ENCODE measurements at regions of chr2 and their contacts with region 1.

Region 1: DNA sequence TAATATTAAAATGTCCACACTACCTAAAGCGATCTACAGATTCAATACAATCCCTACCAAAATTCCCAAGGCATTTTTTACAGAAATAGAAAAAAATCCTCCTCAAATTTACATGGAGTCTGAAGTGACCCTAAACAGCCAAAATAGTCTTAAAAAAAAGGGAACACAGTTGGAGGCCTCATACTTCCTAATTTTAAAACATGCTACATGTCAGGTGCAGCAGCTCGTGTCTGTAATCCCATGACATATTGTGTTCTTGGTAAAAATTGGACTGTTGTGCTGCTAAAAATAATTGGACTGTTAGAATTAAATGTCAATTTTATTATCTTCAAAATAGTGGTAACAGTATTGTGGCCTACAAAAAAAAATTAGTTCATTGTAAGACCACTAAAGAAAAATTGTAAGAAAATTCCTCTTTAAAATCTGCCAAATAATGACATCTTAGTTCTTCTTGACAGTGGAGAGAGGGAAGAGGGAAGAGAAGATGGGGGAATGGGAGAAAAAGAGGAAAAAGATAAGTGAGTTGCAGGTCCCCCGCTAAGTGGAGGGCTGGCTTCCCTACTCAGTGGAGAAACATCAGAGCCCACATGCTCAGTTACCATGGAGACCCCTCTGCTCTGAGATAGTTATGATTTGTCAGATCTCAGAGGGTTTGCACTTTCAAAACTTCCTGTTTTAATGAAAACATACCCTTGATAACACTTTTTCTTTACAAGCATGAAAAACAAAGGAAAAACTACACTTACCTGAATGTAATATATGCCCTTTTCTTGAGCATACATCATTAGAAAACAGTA is 46.5 kb downstream of the UNC50 start:
- DNase-seq: peak; percentile 53
- H3K4me3 Mint-ChIP-seq: peak overlapping the region; percentile 57
- H3K27ac Mint-ChIP-seq: peak overlapping the region; percentile 94
- H3K4me1 Mint-ChIP-seq: peaks cover 80% of the 10 kb centered on the region
- H3K27me3 Mint-ChIP-seq: no peaks in the 10 kb centered on the region

Region 2: DNA sequence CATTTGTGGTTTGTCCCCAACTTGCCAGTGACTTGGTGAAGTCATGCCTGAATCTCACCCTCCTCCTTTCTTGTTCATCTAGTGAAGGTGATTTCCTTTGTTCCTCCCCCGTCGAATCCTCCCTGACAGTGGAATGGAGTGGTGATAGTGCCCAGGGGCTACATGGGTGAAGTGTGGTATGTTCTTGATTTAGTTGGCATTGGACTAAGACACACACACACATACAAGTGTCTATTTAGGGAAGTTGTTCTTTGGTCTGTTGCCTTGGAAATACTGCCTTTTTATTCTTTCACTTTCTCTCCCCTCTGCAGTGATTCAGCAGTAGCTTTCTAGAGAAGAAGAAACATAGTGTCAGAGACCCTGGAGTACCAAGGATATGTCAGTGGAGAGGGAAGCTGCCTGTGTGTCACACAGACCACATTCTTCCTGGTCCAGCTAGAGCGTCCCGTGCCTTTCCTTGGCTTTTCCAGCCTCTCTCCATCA is 199.4 kb before region 1 on chr2:
- CTCF ChIA-PET with region 1: no interaction called
- intact Hi-C with region 1: loop called (anchors 5 kb)
- DNase-seq: peak; percentile 66
- H3K4me3 Mint-ChIP-seq: peak overlapping the region; percentile 59
- H3K27ac Mint-ChIP-seq: peak overlapping the region; percentile 89
- H3K4me1 Mint-ChIP-seq: peaks cover 98% of the 10 kb centered on the region
- H3K27me3 Mint-ChIP-seq: no peaks in the 10 kb centered on the region

Region 3: DNA sequence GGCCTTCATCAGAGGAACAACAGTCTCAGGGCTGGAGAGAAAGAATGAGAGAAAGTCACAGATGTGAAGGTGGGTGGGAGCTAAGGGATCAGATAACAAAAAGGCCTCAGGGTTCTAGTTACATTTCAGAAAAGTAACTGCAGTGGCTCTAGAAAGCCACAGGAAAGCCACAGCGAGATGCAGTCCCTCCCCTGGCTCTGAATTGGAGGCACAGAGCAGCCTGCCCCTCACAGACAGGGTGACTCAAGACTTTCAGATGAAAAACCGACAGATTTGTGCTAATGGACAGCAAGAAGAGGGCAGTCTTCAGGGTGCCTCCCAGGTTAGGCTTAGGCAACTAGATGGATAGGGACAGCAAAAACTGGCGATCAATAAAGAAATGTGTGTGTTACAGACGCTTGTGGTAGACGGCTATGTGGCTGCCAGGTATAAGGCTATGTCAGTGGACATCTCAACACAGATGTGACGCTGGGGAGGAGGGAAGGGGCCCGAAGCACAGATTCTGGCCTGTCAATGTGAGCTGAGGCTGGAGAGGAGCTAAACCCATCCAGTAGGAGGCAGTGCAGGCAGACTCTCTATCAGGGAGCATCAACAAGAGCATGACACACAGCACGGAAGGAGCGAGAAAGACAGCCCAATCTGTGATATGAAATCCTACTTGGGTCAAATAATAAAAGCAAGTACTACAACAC is 20.4 kb before region 1 on chr2:
- CTCF ChIA-PET with region 1: interaction called, 8 read pairs
- intact Hi-C with region 1: loop called (anchors 2 kb)
- DNase-seq: peak; percentile 76
- H3K4me3 Mint-ChIP-seq: no peak overlapping the region
- H3K27ac Mint-ChIP-seq: peak overlapping the region; percentile 85
- H3K4me1 Mint-ChIP-seq: peaks cover 32% of the 10 kb centered on the region
- H3K27me3 Mint-ChIP-seq: no peaks in the 10 kb centered on the region

Region 4: GRCh38 chr2:98692090-98693054 is 37.5 kb after region 1 on chr2:
- CTCF ChIA-PET with region 1: interaction called, 6 read pairs
- intact Hi-C with region 1: loop called (anchors 1 kb)
- DNase-seq: peak; percentile 39
- H3K4me3 Mint-ChIP-seq: peak overlapping the region; percentile 67
- H3K27ac Mint-ChIP-seq: peak overlapping the region; percentile 97
- H3K4me1 Mint-ChIP-seq: peaks cover 83% of the 10 kb centered on the region
- H3K27me3 Mint-ChIP-seq: no peaks in the 10 kb centered on the region

Region 5: GRCh38 chr2:98702127-98702802 is 47.4 kb after region 1 on chr2:
- CTCF ChIA-PET with region 1: interaction called, 9 read pairs
- intact Hi-C with region 1: loop called (anchors 2 kb)
- DNase-seq: peak; percentile 26
- H3K4me3 Mint-ChIP-seq: no peak overlapping the region
- H3K27ac Mint-ChIP-seq: peak overlapping the region; percentile 86
- H3K4me1 Mint-ChIP-seq: peaks cover 72% of the 10 kb centered on the region
- H3K27me3 Mint-ChIP-seq: no peaks in the 10 kb centered on the region

Region 6: DNA sequence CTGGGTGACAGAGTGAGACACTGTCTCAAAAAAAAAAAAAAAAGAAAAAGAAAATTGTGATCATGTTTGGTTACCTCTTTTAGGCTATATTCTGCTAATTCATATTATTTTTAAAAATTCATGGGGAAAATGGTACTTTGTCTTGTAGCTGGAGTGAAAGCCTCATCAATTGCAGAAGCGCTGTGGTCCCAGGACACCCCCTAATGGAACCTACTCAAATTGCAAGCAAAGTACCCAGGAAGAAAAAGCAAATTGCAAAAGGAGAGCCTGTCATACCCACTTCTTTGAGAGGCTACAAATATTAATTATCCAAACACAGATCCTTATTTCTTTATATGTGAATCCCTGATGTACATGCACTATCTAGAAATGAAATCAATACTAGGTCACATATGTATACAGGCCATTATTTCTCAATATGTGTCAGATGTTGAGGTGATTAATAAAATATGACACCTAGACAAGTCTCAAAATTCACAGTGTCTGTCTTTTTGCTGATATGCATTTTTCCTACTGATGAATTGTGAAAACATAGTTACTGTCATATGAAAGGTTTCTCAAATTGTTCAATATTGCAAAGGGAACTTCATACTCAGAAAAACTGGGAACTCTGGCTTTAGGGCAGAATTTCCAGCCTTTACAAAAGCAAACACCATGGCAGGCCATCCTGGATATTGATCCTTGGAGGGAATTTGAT is 268.5 kb after region 1 on chr2:
- CTCF ChIA-PET with region 1: no interaction called
- intact Hi-C with region 1: loop called (anchors 5 kb)
- DNase-seq: no peak
- H3K4me3 Mint-ChIP-seq: no peak overlapping the region
- H3K27ac Mint-ChIP-seq: no peak overlapping the region
- H3K4me1 Mint-ChIP-seq: no peaks in the 10 kb centered on the region
- H3K27me3 Mint-ChIP-seq: no peaks in the 10 kb centered on the region

Measured in activated naive CD4-positive, alpha-beta T cell treated with anti-CD3 and anti-CD28 coated beads for 36 hours (primary cell).